CD4-positive, alpha-beta memory T cell (primary cell): ENCODE measurements at regions of chr14 and their contacts with region 1.

Region 1: GRCh38 chr14:23478111-23478759 is 8.7 kb downstream of the NGDN start:
- DNase-seq: peak; percentile 67 to 73 (median 71)
- H3K4me3 ChIP-seq: no peak overlapping the region
- H3K4me3 Mint-ChIP-seq: no peak overlapping the region
- H3K27ac ChIP-seq: no peak overlapping the region
- H3K27ac Mint-ChIP-seq: peak overlapping the region in 4 of 7 donors; percentile 0 to 83 (median 28)
- H3K4me1 ChIP-seq: peaks cover 8% of the 10 kb centered on the region
- H3K4me1 Mint-ChIP-seq: peaks cover 4 to 12% (median 5%) of the 10 kb centered on the region in 4 donors
- H3K27me3 ChIP-seq: no peaks in the 10 kb centered on the region
- H3K27me3 Mint-ChIP-seq: no peaks in the 10 kb centered on the region

Region 2: GRCh38 chr14:23539248-23540140 is 61.3 kb after region 1 on chr14:
- CTCF ChIA-PET with region 1: interaction called, 31 read pairs
- POLR2A ChIA-PET with region 1: interaction called, 3 read pairs
- intact Hi-C with region 1: loop called (anchors 1 kb)
- DNase-seq: peak in 4 of 5 donors; percentile 37 to 45 (median 38)
- H3K4me3 ChIP-seq: no peak overlapping the region
- H3K4me3 Mint-ChIP-seq: no peak overlapping the region
- H3K27ac ChIP-seq: no peak overlapping the region
- H3K27ac Mint-ChIP-seq: peak overlapping the region in 4 of 7 donors; percentile 19 to 74 (median 41)
- H3K4me1 ChIP-seq: no peaks in the 10 kb centered on the region
- H3K4me1 Mint-ChIP-seq: peaks cover 0 to 6% (median under 1%) of the 10 kb centered on the region in 4 donors
- H3K27me3 ChIP-seq: no peaks in the 10 kb centered on the region
- H3K27me3 Mint-ChIP-seq: peaks cover 0 to 3% of the 10 kb centered on the region in 2 donors